ENCODE measurements at regions of chr17 and their contacts with region 1.

Region 1: DNA sequence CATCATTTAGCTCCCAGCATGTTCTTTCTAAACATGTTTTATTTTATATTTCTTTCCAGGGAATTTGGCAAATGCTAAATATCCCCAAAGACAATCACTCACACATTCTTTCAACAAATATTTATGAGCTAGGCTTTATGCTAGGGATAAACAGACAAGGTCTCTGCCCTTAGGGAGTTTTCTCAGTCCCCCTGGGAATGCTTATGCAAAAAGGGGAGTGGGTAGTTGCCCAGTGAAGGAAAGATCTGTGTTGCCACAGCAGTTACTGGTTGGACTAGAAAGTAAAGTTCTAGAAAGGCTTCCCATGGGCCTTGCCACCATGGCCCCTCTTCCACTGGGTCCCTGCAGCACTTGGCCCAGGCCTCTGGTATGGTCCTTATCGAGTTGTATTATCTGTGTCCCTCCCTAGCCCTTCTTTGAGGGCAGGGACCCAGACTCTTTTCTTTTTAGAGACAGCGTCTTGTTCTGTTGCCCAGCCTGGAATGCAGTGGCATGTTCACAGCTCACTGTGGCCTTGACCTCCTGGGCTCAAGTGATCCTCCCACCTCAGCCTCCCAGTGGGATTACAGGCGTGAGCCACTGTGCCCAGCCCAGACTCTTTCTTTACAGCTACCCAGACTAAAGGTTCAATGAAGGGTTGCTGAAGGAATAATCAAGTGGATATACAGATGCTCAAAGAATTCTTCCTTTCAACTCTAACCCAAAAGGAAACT is 78.0 kb downstream of the YPEL2 start:
- DNase-seq: no peak
- H3K4me3 ChIP-seq: no peak overlapping the region
- H3K27ac ChIP-seq: no peak overlapping the region
- H3K4me1 ChIP-seq: no peaks in the 10 kb centered on the region
- H3K27me3 ChIP-seq: no peaks in the 10 kb centered on the region
- CTCF ChIP-seq: no peak
- POLR2A ChIP-seq: no peak

Region 2: DNA sequence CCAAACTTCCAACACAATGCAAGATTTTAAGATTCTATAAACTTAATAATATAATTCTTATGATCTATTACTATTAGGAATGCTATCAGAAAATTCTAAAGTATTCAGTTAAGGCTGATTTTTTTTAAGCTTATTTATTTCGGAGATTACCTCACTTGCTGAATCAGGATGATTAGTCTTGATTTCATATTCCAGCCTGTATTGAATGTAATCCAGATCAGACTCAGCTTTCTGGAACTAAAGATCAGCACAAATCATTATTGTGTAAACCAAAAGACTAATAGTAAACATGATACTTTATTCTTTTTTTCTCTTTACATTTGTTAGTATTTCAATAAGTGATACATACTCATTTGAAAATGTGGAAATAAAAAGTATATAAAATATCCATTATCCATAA is 278.4 kb before region 1 on chr17:
- intact Hi-C with region 1: no loop called
- DNase-seq: no peak
- H3K4me3 ChIP-seq: no peak overlapping the region
- H3K27ac ChIP-seq: no peak overlapping the region
- H3K4me1 ChIP-seq: no peaks in the 10 kb centered on the region
- H3K27me3 ChIP-seq: no peaks in the 10 kb centered on the region
- CTCF ChIP-seq: no peak
- POLR2A ChIP-seq: no peak

Region 3: GRCh38 chr17:59396134-59396831 is 13.2 kb before region 1 on chr17:
- intact Hi-C with region 1: loop called (anchors 2 kb)
- DNase-seq: no peak
- H3K4me3 ChIP-seq: no peak overlapping the region
- H3K27ac ChIP-seq: no peak overlapping the region
- H3K4me1 ChIP-seq: no peaks in the 10 kb centered on the region
- H3K27me3 ChIP-seq: no peaks in the 10 kb centered on the region
- CTCF ChIP-seq: no peak
- POLR2A ChIP-seq: no peak

Region 4: DNA sequence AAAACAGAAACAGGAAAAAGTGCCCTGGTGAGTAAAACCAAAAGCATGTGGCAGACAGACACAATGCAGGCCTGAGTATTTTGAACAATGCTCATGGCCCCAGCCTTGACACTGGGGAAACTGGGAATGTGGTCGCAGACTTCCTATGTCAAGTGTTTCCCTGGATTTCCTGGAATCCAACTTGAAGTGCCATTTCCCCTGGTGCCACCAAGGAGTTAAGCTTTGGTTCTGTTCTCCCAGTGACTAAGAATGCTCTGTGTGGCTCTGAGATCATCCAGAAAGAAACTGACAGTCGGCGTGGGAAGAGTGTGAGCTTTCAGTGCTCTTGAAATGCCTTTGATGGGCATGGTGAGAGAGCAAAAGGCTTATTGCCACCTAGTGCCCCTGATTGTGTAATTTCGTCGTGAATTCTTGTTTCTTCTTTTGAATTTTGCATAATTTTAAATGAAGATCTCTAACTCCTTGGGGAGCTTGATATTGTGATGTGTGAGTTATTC is 18.0 kb after region 1 on chr17:
- intact Hi-C with region 1: no loop called
- DNase-seq: no peak
- H3K4me3 ChIP-seq: no peak overlapping the region
- H3K27ac ChIP-seq: peak overlapping the region in 1 of 2 donors; percentile 63
- H3K4me1 ChIP-seq: no peaks in the 10 kb centered on the region
- H3K27me3 ChIP-seq: no peaks in the 10 kb centered on the region
- CTCF ChIP-seq: no peak
- POLR2A ChIP-seq: no peak

Measured in breast epithelium (tissue), 4 donors.